ENCODE measurements at regions of chr15 and their contacts with region 1.

Region 1: GRCh38 chr15:98442379-98442833 is 205.9 kb upstream of the IGF1R start:
- H3K4me3 Mint-ChIP-seq: no peak overlapping the region
- H3K27ac Mint-ChIP-seq: no peak overlapping the region
- H3K4me1 Mint-ChIP-seq: no peaks in the 10 kb centered on the region
- H3K27me3 Mint-ChIP-seq: no peaks in the 10 kb centered on the region

Region 2: DNA sequence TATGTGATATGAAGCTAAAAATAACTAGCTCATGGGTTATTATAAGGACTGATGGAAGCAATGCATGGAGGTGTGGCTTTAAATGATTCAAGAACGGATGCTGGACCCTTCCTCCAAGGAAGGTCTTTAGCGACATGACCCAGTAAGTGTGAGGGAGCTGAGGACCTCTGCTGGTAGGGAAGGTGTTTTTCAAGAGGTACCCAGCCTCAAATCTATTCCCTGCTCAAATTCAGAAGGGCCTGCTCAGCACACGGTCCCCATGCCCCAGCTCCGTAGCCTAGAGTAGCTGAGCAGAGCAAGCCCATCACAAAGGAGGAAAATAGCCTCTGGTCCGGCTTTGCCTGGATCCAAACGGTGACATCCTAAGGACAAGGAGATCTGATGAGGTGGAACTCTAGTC is 60.3 kb before region 1 on chr15:
- intact Hi-C with region 1: no loop called
- H3K4me3 Mint-ChIP-seq: no peak overlapping the region
- H3K27ac Mint-ChIP-seq: no peak overlapping the region
- H3K4me1 Mint-ChIP-seq: no peaks in the 10 kb centered on the region
- H3K27me3 Mint-ChIP-seq: peaks cover 3% of the 10 kb centered on the region

Region 3: GRCh38 chr15:98599909-98600691 is 157.7 kb after region 1 on chr15:
- intact Hi-C with region 1: no loop called
- H3K4me3 Mint-ChIP-seq: peak overlapping the region; percentile 91
- H3K27ac Mint-ChIP-seq: peak overlapping the region; percentile 65
- H3K4me1 Mint-ChIP-seq: peaks cover 10% of the 10 kb centered on the region
- H3K27me3 Mint-ChIP-seq: peaks cover 7% of the 10 kb centered on the region

Region 4: GRCh38 chr15:99076552-99077308 is 634.3 kb after region 1 on chr15:
- intact Hi-C with region 1: loop called (anchors 1 kb)
- H3K4me3 Mint-ChIP-seq: peak overlapping the region; percentile 80
- H3K27ac Mint-ChIP-seq: peak overlapping the region; percentile 14
- H3K4me1 Mint-ChIP-seq: peaks cover 5% of the 10 kb centered on the region
- H3K27me3 Mint-ChIP-seq: peaks cover 11% of the 10 kb centered on the region

Region 5: DNA sequence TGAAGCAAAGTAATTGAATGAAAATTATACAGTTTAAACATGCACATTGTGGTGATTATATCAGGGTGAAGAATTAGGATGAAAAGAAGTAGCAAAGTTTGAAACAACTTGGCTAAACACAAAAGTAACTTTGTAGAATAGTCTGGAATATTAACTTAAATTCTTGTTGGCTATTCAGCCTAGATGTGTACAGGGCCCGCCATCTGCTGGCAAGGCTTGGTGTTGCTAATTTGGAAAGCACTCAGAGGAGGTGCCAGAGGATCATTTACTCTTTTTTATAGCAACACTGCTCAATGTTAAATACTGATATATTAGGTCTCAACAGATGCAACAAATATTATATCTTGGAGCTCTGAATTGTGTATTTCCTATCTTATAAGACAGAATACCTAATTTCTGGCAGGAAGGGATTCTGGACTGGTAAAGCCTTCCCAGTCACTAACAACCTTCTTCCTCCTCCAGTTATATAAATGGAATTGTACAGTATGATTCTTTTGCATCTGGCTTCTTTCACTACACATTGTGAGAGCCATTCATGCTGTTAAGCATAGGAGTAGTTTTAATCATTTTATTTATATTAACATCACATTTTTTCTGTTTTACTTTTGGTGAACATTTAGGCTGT is 770.9 kb after region 1 on chr15:
- intact Hi-C with region 1: loop called (anchors 5 kb)
- H3K4me3 Mint-ChIP-seq: no peak overlapping the region
- H3K27ac Mint-ChIP-seq: no peak overlapping the region
- H3K4me1 Mint-ChIP-seq: no peaks in the 10 kb centered on the region
- H3K27me3 Mint-ChIP-seq: no peaks in the 10 kb centered on the region